Transverse colon (tissue), 4 donors: ENCODE measurements at regions of chr6 and their contacts with region 1.

Region 1: GRCh38 chr6:125858427-125859320 is 67.9 kb downstream of the NCOA7 start:
- DNase-seq: peak; percentile 65
- H3K4me3 ChIP-seq: no peak overlapping the region
- H3K27ac ChIP-seq: no peak overlapping the region
- H3K4me1 ChIP-seq: no peaks in the 10 kb centered on the region
- H3K27me3 ChIP-seq: no peaks in the 10 kb centered on the region
- CTCF ChIP-seq: peak; percentile 63 to 77 (median 64)
- EP300 ChIP-seq: no peak
- POLR2A ChIP-seq: no peak

Region 2: DNA sequence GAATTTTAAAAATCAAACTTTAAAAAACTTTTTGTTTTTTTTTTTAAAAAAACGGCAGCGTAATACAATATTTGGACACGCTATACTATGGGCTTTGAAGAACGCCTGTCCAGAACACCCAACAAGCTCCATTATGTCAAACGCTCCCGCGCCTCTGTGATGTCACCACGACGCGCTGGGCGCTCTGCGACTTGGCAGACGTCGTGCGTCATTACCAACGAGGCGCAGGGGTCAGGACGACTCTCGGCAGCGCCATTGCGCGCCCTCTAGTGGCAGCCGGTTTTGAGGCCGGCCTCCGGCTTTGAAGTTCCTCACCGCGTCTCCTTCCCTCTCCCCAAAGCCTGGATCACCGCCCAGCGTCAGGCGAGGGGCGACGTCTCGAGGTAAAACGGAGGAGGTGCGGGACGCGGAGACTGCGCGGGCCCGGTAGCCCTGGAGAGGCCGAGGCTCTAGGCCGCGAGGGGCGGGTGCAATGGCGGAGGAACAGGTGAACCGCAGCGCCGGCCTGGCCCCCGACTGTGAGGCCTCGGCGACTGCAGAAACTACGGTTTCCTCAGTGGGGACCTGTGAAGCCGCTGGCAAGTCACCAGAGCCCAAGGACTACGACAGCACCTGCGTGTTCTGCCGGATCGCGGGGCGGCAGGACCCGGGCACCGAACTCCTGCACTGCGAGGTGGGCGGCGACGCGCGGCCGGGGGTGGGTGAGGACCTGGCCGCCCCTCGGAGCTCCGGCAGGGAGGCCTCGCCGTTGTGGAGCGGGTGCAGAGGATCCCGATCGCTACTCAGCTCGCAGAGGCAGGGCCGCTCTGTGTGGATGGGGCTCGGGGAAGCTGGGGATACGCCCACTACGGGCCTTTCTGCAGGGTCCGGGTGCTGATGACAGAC is 98.1 kb after region 1 on chr6 and contains the start of gene HINT3:
- in situ Hi-C with region 1: loop called in 1 of 4 experiments (anchors 10 kb)
- intact Hi-C with region 1: no loop called
- DNase-seq: peak; percentile 99
- H3K4me3 ChIP-seq: peak within 1 kb of the TSS; percentile 66 to 85 (median 84)
- H3K27ac ChIP-seq: peak within 1 kb of the TSS; percentile 90 to 95 (median 92)
- H3K4me1 ChIP-seq: peaks cover 8 to 27% (median 11%) of the 10 kb centered on the region in 4 donors
- H3K27me3 ChIP-seq: no peaks in the 10 kb centered on the region
- CTCF ChIP-seq: peak; percentile 96 to 100 (median 98)
- EP300 ChIP-seq: no peak
- POLR2A ChIP-seq: peak; percentile 57
- total RNA-seq, gene HINT3: 23.5 to 35.2 (median 30.7) TPM

Region 3: GRCh38 chr6:126359936-126360537 is 501.4 kb after region 1 on chr6:
- in situ Hi-C with region 1: no loop called
- intact Hi-C with region 1: no loop called
- DNase-seq: no peak
- H3K4me3 ChIP-seq: no peak overlapping the region
- H3K27ac ChIP-seq: no peak overlapping the region
- H3K4me1 ChIP-seq: no peaks in the 10 kb centered on the region
- H3K27me3 ChIP-seq: no peaks in the 10 kb centered on the region
- CTCF ChIP-seq: no peak
- EP300 ChIP-seq: no peak
- POLR2A ChIP-seq: no peak